CD8-positive, alpha-beta T cell (primary cell): ENCODE measurements at regions of chr16 and their contacts with region 1.

Region 1: DNA sequence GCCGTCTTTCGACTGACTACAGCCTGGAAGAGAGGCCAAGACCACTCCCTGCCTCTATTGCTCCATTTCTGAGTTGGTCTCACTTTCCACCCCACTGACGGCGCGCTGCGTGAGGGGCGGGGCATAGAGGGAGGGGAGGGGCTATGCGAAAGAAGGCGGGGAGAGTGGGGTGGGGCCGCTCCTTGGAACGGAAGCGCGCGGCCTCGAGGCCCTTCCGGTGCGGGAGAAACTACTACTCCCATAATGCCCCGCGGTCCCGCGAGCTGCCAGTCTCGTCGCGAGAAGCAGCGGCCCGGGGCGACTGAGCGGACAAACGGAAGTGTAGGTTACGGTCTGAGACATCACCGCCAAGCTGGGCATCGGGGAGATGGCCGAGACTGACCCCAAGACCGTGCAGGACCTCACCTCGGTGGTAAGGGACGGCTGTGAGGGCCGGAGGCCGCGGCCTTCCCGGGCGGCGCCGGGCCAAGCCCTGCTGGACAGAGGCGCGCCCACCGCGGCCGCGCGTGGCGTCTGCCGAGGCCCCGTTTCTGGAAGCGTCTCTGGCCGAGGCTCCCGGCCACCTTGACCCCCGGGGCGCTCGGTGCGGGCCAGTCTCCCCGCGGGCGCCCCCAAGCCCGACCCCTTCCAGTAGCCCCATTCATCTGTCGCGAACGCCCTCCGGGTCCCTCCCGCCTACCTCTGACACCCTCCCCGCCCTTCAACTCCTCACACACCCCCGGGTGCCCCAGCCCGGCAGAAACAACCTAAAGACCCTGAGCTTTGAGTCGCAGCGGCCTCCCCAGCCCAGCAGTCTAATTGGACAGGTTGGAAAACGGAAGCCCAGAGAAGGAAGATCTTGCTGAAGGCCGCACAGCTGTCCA is at the start of gene HSBP1:
- DNase-seq: peak; percentile 83 to 95 (median 92)
- ATAC-seq: peak; percentile 98
- H3K4me3 ChIP-seq: peak within 1 kb of the TSS; percentile 82 to 91
- H3K4me3 Mint-ChIP-seq: peak within 1 kb of the TSS; percentile 98
- H3K27ac ChIP-seq: peak within 1 kb of the TSS; percentile 70 to 85
- H3K27ac Mint-ChIP-seq: peak within 1 kb of the TSS; percentile 96
- H3K4me1 ChIP-seq: peaks cover 10% of the 10 kb centered on the region
- H3K4me1 Mint-ChIP-seq: peaks cover 36% of the 10 kb centered on the region
- H3K27me3 ChIP-seq: no peaks in the 10 kb centered on the region
- H3K27me3 Mint-ChIP-seq: no peaks in the 10 kb centered on the region
- CTCF ChIP-seq: no peak
- total RNA-seq, gene HSBP1: 17.5 to 24.1 TPM

Region 2: GRCh38 chr16:82169861-82170845 is 1637.8 kb before region 1 on chr16 and contains the start of gene MPHOSPH6:
- CTCF ChIA-PET with region 1: no interaction called
- POLR2A ChIA-PET with region 1: no interaction called
- intact Hi-C with region 1: loop called in 1 of 2 experiments (anchors 10 kb)
- DNase-seq: peak; percentile 77 to 95 (median 90)
- ATAC-seq: peak; percentile 94
- H3K4me3 ChIP-seq: peak within 1 kb of the TSS; percentile 85 to 95
- H3K4me3 Mint-ChIP-seq: peak within 1 kb of the TSS; percentile 96
- H3K27ac ChIP-seq: peak within 1 kb of the TSS; percentile 82 to 90
- H3K27ac Mint-ChIP-seq: peak within 1 kb of the TSS; percentile 97
- H3K4me1 ChIP-seq: peaks cover 15% of the 10 kb centered on the region
- H3K4me1 Mint-ChIP-seq: peaks cover 36% of the 10 kb centered on the region
- H3K27me3 ChIP-seq: no peaks in the 10 kb centered on the region
- H3K27me3 Mint-ChIP-seq: peaks cover 3% of the 10 kb centered on the region
- CTCF ChIP-seq: no peak
- total RNA-seq, gene MPHOSPH6: 19.5 to 24.1 TPM

Region 3: DNA sequence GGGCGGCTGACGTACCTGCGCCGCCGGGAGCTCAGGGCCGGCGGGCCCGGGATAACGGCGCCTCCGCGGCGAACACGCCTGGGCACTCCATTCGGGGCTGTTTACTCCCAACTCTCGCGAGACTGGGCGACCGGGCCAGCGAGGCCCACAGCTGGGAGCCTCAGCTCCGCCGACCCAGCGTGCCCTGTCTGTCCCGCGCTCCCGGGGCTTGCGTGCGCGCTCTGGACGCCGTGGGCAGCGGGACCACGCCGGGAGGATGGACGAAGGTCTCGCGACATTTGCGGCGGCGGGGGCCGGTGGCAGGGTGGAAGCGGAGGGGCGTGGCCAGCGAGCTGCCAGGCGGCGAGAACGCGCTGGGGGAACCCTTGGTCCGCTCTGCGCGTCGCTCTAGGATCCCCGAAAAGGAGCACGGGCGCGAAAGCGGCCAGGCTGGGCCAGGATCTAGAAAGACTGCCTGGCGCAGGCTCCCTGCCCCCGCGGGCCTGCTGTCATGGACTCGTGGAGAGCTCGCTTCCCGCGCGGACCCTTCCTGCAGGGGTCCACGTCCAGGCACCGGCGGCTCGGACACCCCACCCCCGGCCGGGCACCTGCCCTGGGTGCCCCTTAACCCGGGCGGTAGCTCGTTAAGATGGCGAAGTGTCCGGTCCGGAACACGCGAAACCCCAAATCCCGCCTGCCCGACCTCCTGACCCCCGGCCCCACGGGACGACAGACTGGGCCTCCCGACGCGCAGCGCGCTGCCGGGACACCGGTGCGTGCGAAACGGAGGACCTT is 309.0 kb after region 1 on chr16 and contains the start of gene MBTPS1:
- CTCF ChIA-PET with region 1: no interaction called
- POLR2A ChIA-PET with region 1: interaction called, 4 read pairs
- intact Hi-C with region 1: loop called in 1 of 2 experiments (anchors 1 kb)
- DNase-seq: peak; percentile 96 to 99 (median 98)
- ATAC-seq: peak; percentile 83
- H3K4me3 ChIP-seq: peak within 1 kb of the TSS; percentile 86 to 95
- H3K4me3 Mint-ChIP-seq: peak within 1 kb of the TSS; percentile 90
- H3K27ac ChIP-seq: peak within 1 kb of the TSS; percentile 82 to 91
- H3K27ac Mint-ChIP-seq: peak within 1 kb of the TSS; percentile 94
- H3K4me1 ChIP-seq: peaks cover 19% of the 10 kb centered on the region
- H3K4me1 Mint-ChIP-seq: peaks cover 30% of the 10 kb centered on the region
- H3K27me3 ChIP-seq: no peaks in the 10 kb centered on the region
- H3K27me3 Mint-ChIP-seq: no peaks in the 10 kb centered on the region
- CTCF ChIP-seq: peak; percentile 5
- total RNA-seq, gene MBTPS1: 128 to 130 TPM

Region 4: GRCh38 chr16:85027349-85027957 is 1219.5 kb after region 1 on chr16 and contains the start of gene KIAA0513:
- CTCF ChIA-PET with region 1: no interaction called
- POLR2A ChIA-PET with region 1: no interaction called
- intact Hi-C with region 1: loop called in 1 of 2 experiments (anchors 5 kb)
- DNase-seq: peak; percentile 91 to 98 (median 97)
- ATAC-seq: peak; percentile 62
- H3K4me3 ChIP-seq: peak within 1 kb of the TSS; percentile 64 to 71
- H3K4me3 Mint-ChIP-seq: peak within 1 kb of the TSS; percentile 90
- H3K27ac ChIP-seq: peak within 1 kb of the TSS; percentile 62 to 73
- H3K27ac Mint-ChIP-seq: peak within 1 kb of the TSS; percentile 97
- H3K4me1 ChIP-seq: peaks cover 31% of the 10 kb centered on the region
- H3K4me1 Mint-ChIP-seq: peaks cover 43% of the 10 kb centered on the region
- H3K27me3 ChIP-seq: no peaks in the 10 kb centered on the region
- H3K27me3 Mint-ChIP-seq: no peaks in the 10 kb centered on the region
- CTCF ChIP-seq: no peak
- total RNA-seq, gene KIAA0513: 9.7 to 10.3 TPM